ENCODE measurements at regions of chr6 and their contacts with region 1.

Region 1: GRCh38 chr6:2111162-2111677 is 134.2 kb downstream of the GMDS start:
- DNase-seq: peak; percentile 14
- H3K4me3 Mint-ChIP-seq: peak overlapping the region; percentile 45
- H3K27ac Mint-ChIP-seq: peak overlapping the region; percentile 88
- H3K4me1 Mint-ChIP-seq: peaks cover 36% of the 10 kb centered on the region
- H3K27me3 Mint-ChIP-seq: no peaks in the 10 kb centered on the region

Region 2: DNA sequence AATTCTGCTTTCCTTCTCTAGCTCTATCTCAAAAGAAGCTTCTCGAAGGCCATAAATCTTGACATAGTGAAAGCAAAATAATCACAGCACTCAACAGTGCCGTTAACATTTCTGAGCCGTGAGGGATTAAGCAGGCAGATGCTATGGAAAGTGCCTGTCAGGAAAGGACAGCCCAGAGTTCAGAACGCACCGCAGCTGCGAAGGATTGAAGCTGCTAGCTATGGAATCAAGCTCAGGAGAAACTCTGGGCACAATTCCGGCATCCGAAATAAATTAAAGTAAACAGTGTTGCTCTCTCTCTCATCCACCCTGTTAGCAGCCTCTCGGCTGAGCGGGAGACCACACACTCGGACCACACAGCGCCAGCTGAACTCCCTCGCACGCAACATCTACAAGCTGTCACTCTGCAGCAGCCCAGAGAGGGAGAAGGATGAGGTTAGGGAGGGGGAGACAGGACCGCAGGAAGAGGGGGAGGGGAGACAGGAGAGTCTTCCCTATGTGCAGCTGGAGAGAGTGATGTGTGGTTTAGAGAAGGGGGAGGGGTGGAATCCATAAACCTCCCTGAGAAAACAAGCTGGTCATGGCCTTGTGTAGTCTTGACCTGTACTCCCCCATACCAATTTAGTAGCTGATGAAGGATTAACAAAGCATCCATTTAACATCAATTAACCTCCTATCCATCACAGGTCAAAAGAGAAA is 1427.3 kb before region 1 on chr6:
- CTCF ChIA-PET with region 1: no interaction called
- intact Hi-C with region 1: loop called (anchors 2 kb)
- DNase-seq: no peak
- H3K4me3 Mint-ChIP-seq: peak overlapping the region; percentile 10
- H3K27ac Mint-ChIP-seq: no peak overlapping the region
- H3K4me1 Mint-ChIP-seq: peaks cover 52% of the 10 kb centered on the region
- H3K27me3 Mint-ChIP-seq: no peaks in the 10 kb centered on the region

Region 3: GRCh38 chr6:2037237-2037926 is 73.8 kb before region 1 on chr6:
- CTCF ChIA-PET with region 1: no interaction called
- intact Hi-C with region 1: loop called (anchors 2 kb)
- DNase-seq: peak; percentile 31
- H3K4me3 Mint-ChIP-seq: no peak overlapping the region
- H3K27ac Mint-ChIP-seq: no peak overlapping the region
- H3K4me1 Mint-ChIP-seq: peaks cover 25% of the 10 kb centered on the region
- H3K27me3 Mint-ChIP-seq: peaks cover 5% of the 10 kb centered on the region

Region 4: DNA sequence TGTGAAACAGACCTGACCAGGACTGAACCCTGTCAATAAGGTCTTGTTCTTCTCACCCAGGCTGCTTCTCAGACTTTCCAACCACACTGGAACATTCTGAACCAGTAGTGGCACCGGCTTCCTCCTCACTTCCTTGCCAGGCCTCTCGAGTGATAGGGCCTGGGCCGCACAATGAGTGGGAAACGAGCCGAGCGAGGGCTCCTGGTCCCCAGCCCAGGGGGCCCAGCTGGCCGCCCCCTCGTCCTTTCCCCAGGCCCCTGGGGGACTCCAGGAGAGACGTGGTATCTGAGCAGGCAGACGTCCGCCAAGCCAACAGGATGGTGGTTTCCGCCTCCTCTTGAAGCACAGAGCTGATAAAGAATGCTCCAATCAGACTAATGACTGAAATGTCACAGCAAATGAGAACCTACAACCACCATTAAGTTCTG is 16.3 kb after region 1 on chr6:
- CTCF ChIA-PET with region 1: no interaction called
- intact Hi-C with region 1: loop called (anchors 1 kb)
- DNase-seq: peak; percentile 67
- H3K4me3 Mint-ChIP-seq: no peak overlapping the region
- H3K27ac Mint-ChIP-seq: peak overlapping the region; percentile 12
- H3K4me1 Mint-ChIP-seq: peaks cover 31% of the 10 kb centered on the region
- H3K27me3 Mint-ChIP-seq: no peaks in the 10 kb centered on the region

Region 5: DNA sequence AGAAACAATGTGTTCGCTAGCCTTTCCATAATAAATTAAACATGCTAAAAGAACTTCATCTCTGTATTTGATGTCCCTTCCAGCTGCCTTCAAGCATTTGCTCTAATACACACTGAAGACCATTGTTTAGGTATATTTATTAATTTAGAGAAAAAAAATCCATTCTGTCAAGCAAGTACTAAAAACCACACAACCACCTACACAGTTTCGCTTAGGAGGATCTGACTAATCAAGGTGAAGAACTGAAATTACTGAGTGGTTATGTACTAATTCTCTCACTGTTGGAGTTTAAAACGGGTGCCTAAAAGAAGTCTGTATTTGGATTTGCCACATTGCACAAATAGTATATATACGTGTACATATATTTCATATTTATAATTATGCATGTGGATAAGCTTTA is 75.3 kb after region 1 on chr6:
- CTCF ChIA-PET with region 1: no interaction called
- intact Hi-C with region 1: loop called (anchors 1 kb)
- DNase-seq: peak; percentile 57
- H3K4me3 Mint-ChIP-seq: no peak overlapping the region
- H3K27ac Mint-ChIP-seq: no peak overlapping the region
- H3K4me1 Mint-ChIP-seq: peaks cover 39% of the 10 kb centered on the region
- H3K27me3 Mint-ChIP-seq: peaks cover 8% of the 10 kb centered on the region

Region 6: DNA sequence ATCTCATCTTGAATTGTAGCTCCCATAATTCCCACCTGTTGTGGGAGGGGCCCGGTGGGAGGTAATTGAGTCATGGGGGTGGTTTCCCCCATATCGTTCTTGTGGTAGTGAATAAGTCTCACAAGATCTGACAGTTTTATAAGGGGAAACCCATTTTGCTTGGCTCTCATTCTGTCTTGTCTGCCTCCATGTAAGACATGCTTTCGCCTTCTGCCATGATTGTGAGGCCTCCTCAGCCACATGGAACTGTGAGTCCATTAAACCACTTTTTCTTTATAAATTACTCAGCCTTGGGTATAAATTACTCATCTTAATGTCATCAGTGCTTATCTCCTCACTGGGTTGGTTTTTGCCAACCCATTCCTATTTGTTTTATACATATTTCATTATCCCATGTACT is 276.2 kb after region 1 on chr6:
- CTCF ChIA-PET with region 1: no interaction called
- intact Hi-C with region 1: loop called (anchors 2 kb)
- DNase-seq: peak; percentile 25
- H3K4me3 Mint-ChIP-seq: no peak overlapping the region
- H3K27ac Mint-ChIP-seq: no peak overlapping the region
- H3K4me1 Mint-ChIP-seq: peaks cover 4% of the 10 kb centered on the region
- H3K27me3 Mint-ChIP-seq: no peaks in the 10 kb centered on the region

Region 7: GRCh38 chr6:3032986-3033385 is 921.8 kb after region 1 on chr6:
- CTCF ChIA-PET with region 1: no interaction called
- intact Hi-C with region 1: no loop called
- DNase-seq: no peak
- H3K4me3 Mint-ChIP-seq: no peak overlapping the region
- H3K27ac Mint-ChIP-seq: no peak overlapping the region
- H3K4me1 Mint-ChIP-seq: peaks cover 6% of the 10 kb centered on the region
- H3K27me3 Mint-ChIP-seq: no peaks in the 10 kb centered on the region

Measured in activated naive CD4-positive, alpha-beta T cell treated with anti-CD3 and anti-CD28 coated beads for 36 hours (primary cell).